CD14-positive monocyte (primary cell): ENCODE measurements at regions of chr1 and their contacts with region 1.

Region 1: DNA sequence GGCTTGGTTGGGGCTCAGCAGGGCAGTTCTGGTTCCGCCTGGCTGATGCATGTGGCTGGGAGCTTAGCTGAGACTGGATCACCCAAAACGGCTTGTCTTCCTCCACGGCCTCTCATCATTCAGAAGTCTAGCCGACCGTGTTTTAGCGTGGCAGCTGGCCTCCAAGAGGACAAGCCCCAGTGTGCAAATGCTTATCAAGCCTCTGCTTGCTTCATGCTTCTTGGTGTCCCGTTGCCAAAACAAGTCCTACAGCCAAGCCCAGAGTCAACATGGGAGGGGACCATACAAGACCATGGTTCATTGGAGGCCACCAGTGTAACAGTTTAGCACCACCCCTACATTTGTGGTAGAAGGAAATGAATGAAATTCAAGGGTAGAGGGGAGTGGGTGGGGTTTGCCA is 10.5 kb upstream of the KDF1 start:
- DNase-seq: no peak
- H3K4me3 ChIP-seq: no peak overlapping the region
- H3K4me3 Mint-ChIP-seq: no peak overlapping the region
- H3K27ac ChIP-seq: no peak overlapping the region
- H3K27ac Mint-ChIP-seq: no peak overlapping the region
- H3K4me1 ChIP-seq: no peaks in the 10 kb centered on the region
- H3K4me1 Mint-ChIP-seq: no peaks in the 10 kb centered on the region
- H3K27me3 ChIP-seq: no peaks in the 10 kb centered on the region
- H3K27me3 Mint-ChIP-seq: peaks cover 11 to 20% (median 13%) of the 10 kb centered on the region in 3 donors
- CTCF ChIP-seq: no peak

Region 2: DNA sequence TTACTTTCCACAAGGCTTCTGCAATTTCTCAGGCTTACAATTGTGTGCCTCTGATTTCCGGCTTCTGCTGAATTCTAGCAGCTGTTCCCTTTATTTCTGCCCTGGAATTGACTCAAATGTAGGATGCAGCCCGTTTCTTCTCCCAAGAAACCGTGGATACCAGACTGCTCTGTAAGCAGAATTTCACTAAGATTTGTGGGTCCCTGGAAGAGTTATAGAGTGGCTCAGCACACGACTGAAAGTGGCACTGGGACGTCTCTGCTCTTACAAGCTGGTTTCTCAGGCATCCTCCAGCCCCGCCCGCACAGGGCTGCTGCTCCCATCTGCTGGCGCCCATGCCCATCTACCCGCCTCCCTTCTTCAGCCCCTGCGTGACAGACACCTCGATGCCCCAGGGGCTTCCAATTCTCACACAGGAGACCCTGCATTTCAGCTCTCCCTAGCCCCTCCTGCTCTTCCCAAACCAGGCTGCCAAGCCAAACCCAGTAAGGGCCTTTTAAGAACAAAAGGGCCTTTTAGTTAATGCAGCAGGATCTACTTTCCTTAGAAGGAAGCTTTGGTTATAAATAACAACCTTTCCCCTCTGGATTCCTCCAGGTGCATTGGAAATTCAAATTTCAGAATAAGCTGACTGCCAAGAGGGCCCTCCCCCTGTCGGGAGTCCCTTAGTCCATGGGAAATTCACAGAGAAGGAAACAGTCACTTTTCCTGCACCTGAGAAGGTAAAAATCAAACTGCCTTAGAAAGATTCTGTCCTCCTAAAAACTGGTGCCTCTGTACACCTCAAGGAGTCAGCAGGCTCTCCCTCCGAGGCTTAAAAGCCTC is 87.2 kb after region 1 on chr1:
- intact Hi-C with region 1: no loop called
- DNase-seq: no peak
- H3K4me3 ChIP-seq: no peak overlapping the region
- H3K4me3 Mint-ChIP-seq: no peak overlapping the region
- H3K27ac ChIP-seq: no peak overlapping the region
- H3K27ac Mint-ChIP-seq: peak overlapping the region in 1 of 7 donors; percentile 3
- H3K4me1 ChIP-seq: no peaks in the 10 kb centered on the region
- H3K4me1 Mint-ChIP-seq: no peaks in the 10 kb centered on the region
- H3K27me3 ChIP-seq: no peaks in the 10 kb centered on the region
- H3K27me3 Mint-ChIP-seq: peaks cover 3 to 7% (median 7%) of the 10 kb centered on the region in 3 donors
- CTCF ChIP-seq: no peak

Region 3: DNA sequence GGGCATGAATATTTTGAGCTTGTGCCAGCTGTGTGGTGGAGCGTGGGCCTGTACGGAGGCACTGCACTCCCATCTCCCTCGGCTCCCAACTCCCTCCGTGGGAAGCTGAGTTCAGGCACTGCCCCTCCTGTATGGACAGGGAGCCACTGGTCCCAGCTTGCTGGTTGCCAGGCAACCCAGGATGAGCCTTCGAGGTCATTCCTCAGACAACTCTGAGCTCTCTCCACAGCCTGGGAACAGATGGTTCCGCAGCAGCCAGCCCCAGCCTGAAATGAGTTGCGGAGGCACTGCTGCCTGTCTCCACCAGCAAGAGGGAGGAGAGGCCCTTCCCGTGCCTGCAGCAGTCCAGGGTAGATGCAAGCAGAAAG is 100.2 kb after region 1 on chr1:
- intact Hi-C with region 1: no loop called
- DNase-seq: no peak
- H3K4me3 ChIP-seq: no peak overlapping the region
- H3K4me3 Mint-ChIP-seq: no peak overlapping the region
- H3K27ac ChIP-seq: no peak overlapping the region
- H3K27ac Mint-ChIP-seq: no peak overlapping the region
- H3K4me1 ChIP-seq: peaks cover 7% of the 10 kb centered on the region in 2 donors
- H3K4me1 Mint-ChIP-seq: peaks cover 14% of the 10 kb centered on the region
- H3K27me3 ChIP-seq: no peaks in the 10 kb centered on the region
- H3K27me3 Mint-ChIP-seq: peaks cover 0 to 12% (median 0%) of the 10 kb centered on the region in 3 donors
- CTCF ChIP-seq: no peak

Region 4: GRCh38 chr1:27087371-27088220 is 116.8 kb after region 1 on chr1:
- intact Hi-C with region 1: loop called in 1 of 2 experiments (anchors 10 kb)
- DNase-seq: peak in 1 of 3 donors; percentile 42
- H3K4me3 ChIP-seq: no peak overlapping the region
- H3K4me3 Mint-ChIP-seq: no peak overlapping the region
- H3K27ac ChIP-seq: no peak overlapping the region
- H3K27ac Mint-ChIP-seq: peak overlapping the region in 2 of 7 donors; percentile 40 to 70
- H3K4me1 ChIP-seq: no peaks in the 10 kb centered on the region
- H3K4me1 Mint-ChIP-seq: peaks cover 2% of the 10 kb centered on the region
- H3K27me3 ChIP-seq: no peaks in the 10 kb centered on the region
- H3K27me3 Mint-ChIP-seq: peaks cover 3 to 5% (median 3%) of the 10 kb centered on the region in 3 donors
- CTCF ChIP-seq: no peak